Tibial artery (tissue), 4 donors: ENCODE measurements at regions of chr11 and their contacts with region 1.

Region 1: GRCh38 chr11:84673753-84674152 is 953.4 kb downstream of the DLG2 start:
- DNase-seq: no peak
- H3K4me3 ChIP-seq: no peak overlapping the region
- H3K27ac ChIP-seq: no peak overlapping the region
- H3K4me1 ChIP-seq: no peaks in the 10 kb centered on the region
- H3K27me3 ChIP-seq: no peaks in the 10 kb centered on the region
- CTCF ChIP-seq: no peak

Region 2: GRCh38 chr11:84173078-84173477 is 500.7 kb before region 1 on chr11:
- intact Hi-C with region 1: loop called (anchors 5 kb)
- DNase-seq: no peak
- H3K4me3 ChIP-seq: no peak overlapping the region
- H3K27ac ChIP-seq: no peak overlapping the region
- H3K4me1 ChIP-seq: peaks cover 0 to 4% (median 0%) of the 10 kb centered on the region in 4 donors
- H3K27me3 ChIP-seq: no peaks in the 10 kb centered on the region
- CTCF ChIP-seq: no peak

Region 3: DNA sequence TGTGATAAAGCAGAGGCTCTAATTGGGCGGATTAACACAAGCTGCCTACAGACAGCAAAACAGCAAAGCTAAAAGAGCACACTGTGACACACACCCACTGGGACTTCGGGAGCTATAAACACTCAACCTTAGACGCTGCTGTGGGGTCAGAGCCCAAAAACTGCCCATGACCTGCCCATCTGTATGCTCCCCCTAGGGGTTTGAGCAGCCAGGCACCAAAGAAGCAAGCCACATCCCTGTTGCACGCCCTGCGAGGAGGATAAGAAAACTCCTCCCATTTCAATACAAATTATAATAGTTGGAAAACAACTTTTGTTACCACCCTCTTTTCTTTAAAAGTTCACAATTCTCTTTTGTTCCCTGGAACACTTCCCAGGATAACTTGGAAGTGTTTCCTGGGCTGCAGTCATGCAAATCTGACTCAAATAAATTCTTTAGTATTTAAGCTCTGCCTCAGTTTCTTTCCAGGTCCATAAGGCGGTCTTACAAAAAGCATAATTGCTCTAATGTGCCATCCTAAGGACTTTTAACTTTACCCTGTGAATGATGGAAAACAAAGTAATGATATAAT is 867.0 kb after region 1 on chr11:
- intact Hi-C with region 1: loop called (anchors 5 kb)
- DNase-seq: no peak
- H3K4me3 ChIP-seq: no peak overlapping the region
- H3K27ac ChIP-seq: no peak overlapping the region
- H3K4me1 ChIP-seq: peaks cover 0 to 7% (median 2%) of the 10 kb centered on the region in 4 donors
- H3K27me3 ChIP-seq: no peaks in the 10 kb centered on the region
- CTCF ChIP-seq: no peak